B cell (primary cell): ENCODE measurements at regions of chr9 and their contacts with region 1.

Region 1: DNA sequence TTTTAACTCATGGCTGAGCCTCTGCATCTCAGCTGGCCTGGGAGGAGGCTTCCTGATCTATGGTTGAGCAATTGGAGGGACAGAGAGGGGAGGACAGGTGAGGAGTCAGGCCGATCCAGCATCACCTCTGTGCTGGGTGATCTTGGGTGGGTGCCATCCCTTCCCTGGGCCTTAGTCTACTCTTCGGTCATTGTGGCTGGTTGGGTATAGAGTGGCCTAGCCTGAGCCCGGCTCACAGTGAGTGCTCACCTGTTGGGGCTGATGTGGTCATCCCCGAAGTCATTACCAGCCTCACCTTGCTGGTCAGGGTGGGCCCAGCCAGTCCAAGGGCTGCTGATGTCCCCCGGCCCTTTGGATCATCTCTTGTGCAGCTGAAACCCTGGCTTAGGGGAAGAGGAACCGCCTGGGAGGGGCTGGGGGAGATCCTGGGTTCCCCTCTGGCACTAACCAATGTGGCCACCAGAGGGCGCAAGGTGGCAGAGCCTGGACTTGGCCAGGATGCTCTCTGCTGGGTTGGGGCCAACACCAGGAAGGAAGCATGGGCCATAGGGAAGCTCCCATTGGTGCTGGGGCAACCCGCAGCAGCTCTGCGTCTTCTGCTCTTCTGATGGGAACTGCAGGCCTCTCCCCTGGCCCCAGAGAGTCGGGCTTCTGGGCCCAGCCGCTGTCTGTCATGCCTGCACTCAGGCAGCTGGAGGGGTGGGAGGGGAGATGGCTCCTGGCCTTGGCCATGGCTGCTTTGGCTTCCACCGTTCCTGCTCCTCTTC is 17.3 kb upstream of the ODF2 start:
- DNase-seq: peak; percentile 84
- ATAC-seq: peak; percentile 94
- H3K4me3 ChIP-seq: no peak overlapping the region
- H3K4me3 Mint-ChIP-seq: no peak overlapping the region
- H3K27ac ChIP-seq: no peak overlapping the region
- H3K27ac Mint-ChIP-seq: no peak overlapping the region
- H3K4me1 ChIP-seq: peaks cover 3 to 8% of the 10 kb centered on the region in 2 donors
- H3K4me1 Mint-ChIP-seq: peaks cover 7% of the 10 kb centered on the region
- H3K27me3 ChIP-seq: no peaks in the 10 kb centered on the region
- H3K27me3 Mint-ChIP-seq: no peaks in the 10 kb centered on the region
- CTCF ChIP-seq: peak; percentile 90

Region 2: GRCh38 chr9:128504485-128505413 is 66.2 kb after region 1 on chr9 and contains the start of gene GLE1:
- CTCF ChIA-PET with region 1: interaction called, 5 read pairs
- POLR2A ChIA-PET with region 1: no interaction called
- intact Hi-C with region 1: loop called (anchors 1 kb)
- DNase-seq: peak; percentile 97
- ATAC-seq: peak; percentile 93
- H3K4me3 ChIP-seq: peak within 1 kb of the TSS; percentile 85 to 97 (median 87)
- H3K4me3 Mint-ChIP-seq: peak within 1 kb of the TSS; percentile 100
- H3K27ac ChIP-seq: peak within 1 kb of the TSS; percentile 69 to 80
- H3K27ac Mint-ChIP-seq: peak within 1 kb of the TSS; percentile 99
- H3K4me1 ChIP-seq: peaks cover 8 to 13% of the 10 kb centered on the region in 2 donors
- H3K4me1 Mint-ChIP-seq: peaks cover 23% of the 10 kb centered on the region
- H3K27me3 ChIP-seq: no peaks in the 10 kb centered on the region
- H3K27me3 Mint-ChIP-seq: no peaks in the 10 kb centered on the region
- CTCF ChIP-seq: no peak
- total RNA-seq, gene GLE1: 30.3 and 31.9 TPM in 2 replicates